Endothelial cell of umbilical vein (primary cell): ENCODE measurements at regions of chr6 and their contacts with region 1.

Region 1: DNA sequence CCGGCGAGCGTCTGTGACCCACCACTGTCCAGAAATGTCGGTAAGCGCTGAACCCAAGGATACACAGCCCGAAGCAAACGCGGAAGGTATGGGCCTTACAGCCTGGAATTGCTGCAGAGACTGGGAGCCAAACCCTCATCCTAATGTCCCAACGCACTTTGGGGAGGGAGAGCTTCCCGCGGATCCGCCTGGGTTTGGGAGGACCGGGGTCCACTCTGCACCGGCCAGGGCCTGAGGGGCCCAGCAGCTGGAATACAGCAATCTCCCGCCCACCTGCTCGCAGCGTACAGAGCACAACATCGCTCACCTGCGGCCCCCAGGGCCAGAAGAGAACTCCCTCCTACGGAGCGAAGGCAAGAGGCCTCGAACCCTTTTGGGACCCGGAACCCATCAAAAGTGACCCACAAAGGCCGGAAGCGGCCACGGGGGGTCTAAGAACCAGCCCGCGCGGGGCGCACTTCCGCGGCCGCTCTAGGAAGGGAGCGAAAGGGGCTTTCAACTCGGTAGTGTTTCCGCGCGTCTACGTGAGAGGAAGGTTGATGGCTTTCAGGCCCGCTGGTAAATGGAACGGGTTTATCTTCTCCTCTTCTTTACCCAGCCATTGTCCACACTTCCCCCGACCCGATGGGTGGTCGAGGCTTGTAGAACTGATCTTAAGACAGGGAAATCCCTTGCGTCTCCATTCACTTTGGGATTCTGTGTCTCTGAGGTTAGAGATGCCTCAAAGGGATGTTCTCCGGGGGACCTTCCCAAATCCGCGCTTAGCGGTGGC is at the start of gene ZSCAN12:
- DNase-seq: peak; percentile 72
- H3K4me3 ChIP-seq: peak within 1 kb of the TSS; percentile 58 to 95 (median 94)
- H3K27ac ChIP-seq: peak within 1 kb of the TSS; percentile 60
- H3K4me1 ChIP-seq: peaks cover 16% of the 10 kb centered on the region
- H3K27me3 ChIP-seq: peaks cover 9 to 18% of the 10 kb centered on the region in 2 experiments
- CTCF ChIP-seq: peak; percentile 39 to 71
- POLR2A ChIP-seq: peak; percentile 80
- total RNA-seq, gene ZSCAN12: 4.2 and 4.4 TPM in 2 replicates

Region 2: GRCh38 chr6:28080631-28081485 is 318.7 kb before region 1 on chr6:
- CTCF ChIA-PET with region 1: no interaction called
- POLR2A ChIA-PET with region 1: no interaction called
- dilution Hi-C with region 1: no loop called
- intact Hi-C with region 1: loop called (anchors 2 kb)
- DNase-seq: peak; percentile 97
- H3K4me3 ChIP-seq: peak overlapping the region; percentile 1 to 73 (median 64)
- H3K27ac ChIP-seq: peak overlapping the region; percentile 87
- H3K4me1 ChIP-seq: peaks cover 9% of the 10 kb centered on the region
- H3K27me3 ChIP-seq: no peaks in the 10 kb centered on the region
- CTCF ChIP-seq: no peak
- POLR2A ChIP-seq: peak; percentile 36

Region 3: DNA sequence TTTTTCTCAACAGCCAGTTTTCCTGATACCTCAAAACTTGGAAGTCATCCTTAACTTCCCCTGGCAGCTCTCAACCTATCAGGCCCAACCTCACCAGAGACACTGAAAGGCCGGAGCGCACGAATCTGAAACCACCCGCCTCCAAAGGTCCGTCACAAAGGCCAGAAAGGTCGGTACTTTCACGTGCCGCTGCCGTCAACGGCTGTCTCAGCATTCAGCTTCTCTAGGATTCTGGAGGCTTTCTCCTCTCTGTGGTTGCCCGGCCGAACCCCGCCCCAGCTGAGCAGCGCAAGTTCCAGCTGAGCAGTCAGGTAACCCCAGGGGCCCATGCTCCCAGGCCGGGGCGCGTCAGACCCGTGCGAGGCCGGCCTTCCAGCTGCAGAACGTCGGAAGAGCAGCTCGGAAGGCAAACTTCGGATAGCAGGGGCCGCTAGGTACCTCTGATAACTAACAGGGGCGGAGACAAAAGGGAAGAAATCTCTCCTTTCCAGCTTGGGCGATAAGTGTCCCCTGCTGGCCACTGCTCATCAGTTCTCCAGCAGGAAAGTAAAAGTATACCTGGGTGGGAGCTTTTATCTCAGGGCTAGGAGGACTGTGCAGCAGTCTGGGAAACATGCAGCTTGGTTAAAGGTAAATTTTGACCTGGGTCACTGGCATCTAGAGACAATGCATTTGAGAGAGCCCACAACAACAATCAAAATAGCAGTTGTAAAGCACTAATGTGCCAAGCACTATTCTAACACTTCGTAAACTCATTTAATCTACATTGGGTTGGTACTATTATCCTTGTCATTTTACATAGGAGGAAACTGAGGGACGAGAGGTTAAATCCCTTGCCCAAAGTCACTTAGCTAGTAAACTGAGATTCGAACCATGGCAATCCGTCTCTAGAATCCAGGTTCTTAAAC is 16.0 kb before region 1 on chr6:
- CTCF ChIA-PET with region 1: interaction called, 12 read pairs
- POLR2A ChIA-PET with region 1: no interaction called
- dilution Hi-C with region 1: no loop called
- intact Hi-C with region 1: loop called (anchors 1 kb)
- DNase-seq: peak; percentile 93
- H3K4me3 ChIP-seq: peak overlapping the region; percentile 37 to 45 (median 42)
- H3K27ac ChIP-seq: peak overlapping the region; percentile 14
- H3K4me1 ChIP-seq: peaks cover 9% of the 10 kb centered on the region
- H3K27me3 ChIP-seq: no peaks in the 10 kb centered on the region
- CTCF ChIP-seq: peak; percentile 54 to 62
- POLR2A ChIP-seq: no peak

Region 4: GRCh38 chr6:28413681-28414080 is 14.1 kb after region 1 on chr6:
- CTCF ChIA-PET with region 1: no interaction called
- POLR2A ChIA-PET with region 1: no interaction called
- dilution Hi-C with region 1: no loop called
- intact Hi-C with region 1: no loop called
- DNase-seq: no peak
- H3K4me3 ChIP-seq: no peak overlapping the region
- H3K27ac ChIP-seq: no peak overlapping the region
- H3K4me1 ChIP-seq: no peaks in the 10 kb centered on the region
- H3K27me3 ChIP-seq: peaks cover 4% of the 10 kb centered on the region in 2 experiments
- CTCF ChIP-seq: no peak
- POLR2A ChIP-seq: no peak

Region 5: DNA sequence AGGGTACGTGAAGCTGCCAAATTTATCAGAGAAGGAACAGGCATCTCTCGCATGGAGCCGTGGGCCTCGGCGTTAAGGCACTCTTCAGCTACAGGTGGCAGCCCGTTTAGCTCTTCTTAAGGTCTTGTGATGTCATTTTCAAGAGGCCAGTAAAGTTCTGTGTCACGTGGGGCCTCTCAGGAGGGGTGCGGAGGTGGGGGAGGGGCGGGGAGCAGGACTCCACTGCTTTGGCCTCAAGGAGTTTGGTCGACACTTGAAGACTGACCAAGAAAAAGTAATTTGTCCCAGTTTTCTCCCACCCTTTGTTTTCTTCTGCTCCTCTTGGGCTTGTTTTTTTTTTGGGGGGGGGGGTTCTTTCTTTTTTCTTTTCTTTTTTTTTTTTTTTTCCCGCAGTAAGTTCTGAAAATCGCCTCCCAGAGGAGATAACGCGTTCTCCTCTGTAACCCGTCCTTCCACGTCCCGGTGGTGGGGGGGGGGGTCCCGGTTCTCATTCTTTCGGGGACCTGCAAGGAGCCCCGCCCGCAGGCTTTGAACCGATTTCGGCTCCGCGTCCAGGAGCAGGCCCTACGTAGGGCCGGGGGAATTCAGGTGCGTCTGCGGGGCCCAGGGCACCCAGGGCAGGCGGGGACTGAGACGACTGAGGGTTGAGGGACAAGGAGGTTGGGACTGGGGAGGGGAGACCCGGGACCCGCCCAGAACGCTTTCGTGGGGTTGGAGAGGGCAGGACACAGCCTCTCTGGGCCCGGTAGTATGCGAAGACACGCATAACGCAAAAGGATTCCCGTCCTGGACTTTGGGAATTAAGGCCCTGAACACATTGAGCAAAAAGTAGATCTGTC is 90.0 kb after region 1 on chr6:
- CTCF ChIA-PET with region 1: no interaction called
- POLR2A ChIA-PET with region 1: no interaction called
- dilution Hi-C with region 1: no loop called
- intact Hi-C with region 1: loop called (anchors 5 kb)
- DNase-seq: peak; percentile 58
- H3K4me3 ChIP-seq: peak overlapping the region; percentile 48 to 97 (median 82)
- H3K27ac ChIP-seq: no peak overlapping the region
- H3K4me1 ChIP-seq: peaks cover 6% of the 10 kb centered on the region
- H3K27me3 ChIP-seq: peaks cover 5 to 10% of the 10 kb centered on the region in 2 experiments
- CTCF ChIP-seq: no peak
- POLR2A ChIP-seq: no peak

Region 6: GRCh38 chr6:28586962-28587745 is 187.6 kb after region 1 on chr6:
- CTCF ChIA-PET with region 1: no interaction called
- POLR2A ChIA-PET with region 1: no interaction called
- dilution Hi-C with region 1: no loop called
- intact Hi-C with region 1: loop called (anchors 5 kb)
- DNase-seq: no peak
- H3K4me3 ChIP-seq: peak overlapping the region; percentile 6 to 50 (median 25)
- H3K27ac ChIP-seq: no peak overlapping the region
- H3K4me1 ChIP-seq: peaks cover 12% of the 10 kb centered on the region
- H3K27me3 ChIP-seq: peaks cover 22 to 47% of the 10 kb centered on the region in 2 experiments
- CTCF ChIP-seq: no peak
- POLR2A ChIP-seq: no peak